Activated CD8-positive, alpha-beta T cell treated with anti-CD3 and anti-CD28 coated beads, Interleukin-2, amount 10 ng/mL, durations not matched to agents 7 days and 5 days (primary cell): ENCODE measurements at regions of chr1 and their contacts with region 1.

Region 1: DNA sequence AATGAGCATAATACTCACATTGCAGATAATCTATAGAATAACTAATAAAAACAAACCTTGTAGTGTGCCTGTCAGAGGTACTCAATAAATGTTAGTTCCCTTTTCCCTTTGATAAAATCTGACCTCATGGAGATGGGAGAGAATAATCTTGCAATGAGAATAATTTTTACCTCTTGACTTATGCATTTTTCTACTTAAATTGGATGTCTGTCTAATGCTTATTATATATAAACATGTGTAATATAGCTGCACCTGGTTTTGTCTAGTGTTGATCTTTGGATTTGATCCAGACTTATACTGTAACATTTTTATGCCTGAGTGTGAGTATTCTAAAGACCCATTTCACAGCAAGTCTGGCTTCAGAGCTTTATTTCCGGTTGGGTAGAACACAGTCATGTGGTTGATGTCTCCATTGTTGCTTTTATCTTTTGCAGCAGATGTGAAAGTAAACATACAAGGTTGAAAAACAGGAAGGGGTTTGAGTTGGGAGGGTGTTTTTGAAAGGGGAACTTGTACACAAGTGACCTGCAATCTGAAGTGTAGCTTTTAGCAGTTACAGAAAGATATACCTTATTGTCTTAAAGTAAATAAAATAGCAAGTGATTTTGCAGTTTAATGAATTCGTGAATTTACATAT is 12.4 kb downstream of the EPB41 start:
- DNase-seq: peak; percentile 67
- ATAC-seq: peak; percentile 90
- H3K4me3 Mint-ChIP-seq: peak overlapping the region; percentile 67
- H3K27ac Mint-ChIP-seq: peak overlapping the region; percentile 90
- H3K4me1 Mint-ChIP-seq: peaks cover 38% of the 10 kb centered on the region
- H3K27me3 Mint-ChIP-seq: no peaks in the 10 kb centered on the region

Region 2: GRCh38 chr1:28914228-28915030 is 12.3 kb before region 1 on chr1 and contains the start of gene EPB41:
- CTCF ChIA-PET with region 1: interaction called, 3 read pairs
- POLR2A ChIA-PET with region 1: interaction called, 27 read pairs
- DNase-seq: peak; percentile 94
- ATAC-seq: peak; percentile 89
- H3K4me3 Mint-ChIP-seq: peak within 1 kb of the TSS; percentile 96
- H3K27ac Mint-ChIP-seq: peak within 1 kb of the TSS; percentile 94
- H3K4me1 Mint-ChIP-seq: peaks cover 41% of the 10 kb centered on the region
- H3K27me3 Mint-ChIP-seq: no peaks in the 10 kb centered on the region
- total RNA-seq, gene EPB41: 94.5 to 95.4 TPM